CD4-positive, alpha-beta T cell (primary cell): ENCODE measurements at regions of chr2 and their contacts with region 1.

Region 1: GRCh38 chr2:143259368-143259958 is 130.2 kb downstream of the ARHGAP15 start:
- DNase-seq: peak; percentile 56 to 89 (median 66)
- ATAC-seq: peak; percentile 39
- H3K4me3 ChIP-seq: peak overlapping the region; percentile 13
- H3K4me3 Mint-ChIP-seq: peak overlapping the region; percentile 81
- H3K27ac ChIP-seq: peak overlapping the region in 1 of 2 donors; percentile 50
- H3K27ac Mint-ChIP-seq: peak overlapping the region; percentile 86
- H3K4me1 ChIP-seq: peaks cover 43% of the 10 kb centered on the region
- H3K4me1 Mint-ChIP-seq: peaks cover 85% of the 10 kb centered on the region
- H3K27me3 ChIP-seq: no peaks in the 10 kb centered on the region
- H3K27me3 Mint-ChIP-seq: no peaks in the 10 kb centered on the region
- CTCF ChIP-seq: peak; percentile 89

Region 2: DNA sequence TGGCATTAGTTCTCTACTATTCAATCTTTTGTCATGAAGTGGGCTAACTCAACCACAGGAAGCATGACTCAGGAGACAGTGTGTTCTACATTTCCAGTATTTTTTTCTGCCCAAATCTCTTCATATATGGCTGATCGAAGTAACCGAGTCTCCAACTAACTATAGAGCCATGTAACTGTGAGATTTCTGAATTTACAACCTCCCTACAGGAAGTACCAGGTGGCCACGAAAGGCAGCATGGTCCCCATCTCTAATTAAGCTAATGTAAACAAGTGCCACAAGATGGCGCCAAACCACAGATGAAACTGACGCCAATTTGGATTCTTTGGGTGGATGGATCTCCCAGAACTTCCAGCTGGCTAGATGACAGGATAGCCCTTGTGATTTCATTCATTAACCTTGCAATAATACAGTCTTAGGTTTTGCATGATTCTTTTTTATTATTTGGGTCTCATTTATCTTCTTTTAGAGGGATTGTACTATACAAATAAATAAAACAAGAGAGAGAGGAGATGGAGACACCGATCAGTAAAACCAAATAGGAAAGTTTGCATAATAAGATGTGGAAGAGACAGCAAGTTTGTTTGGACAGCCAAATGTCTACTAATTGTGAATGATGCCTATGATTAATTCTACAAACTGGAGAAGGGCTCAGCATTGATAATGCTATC is 148.6 kb before region 1 on chr2:
- CTCF ChIA-PET with region 1: interaction called, 42 read pairs
- POLR2A ChIA-PET with region 1: interaction called, 42 read pairs
- intact Hi-C with region 1: loop called (anchors 1 kb)
- DNase-seq: peak; percentile 39 to 88 (median 54)
- ATAC-seq: peak; percentile 93
- H3K4me3 ChIP-seq: no peak overlapping the region
- H3K4me3 Mint-ChIP-seq: no peak overlapping the region
- H3K27ac ChIP-seq: peak overlapping the region in 1 of 2 donors; percentile 20
- H3K27ac Mint-ChIP-seq: peak overlapping the region; percentile 34
- H3K4me1 ChIP-seq: peaks cover 5% of the 10 kb centered on the region
- H3K4me1 Mint-ChIP-seq: peaks cover 42% of the 10 kb centered on the region
- H3K27me3 ChIP-seq: no peaks in the 10 kb centered on the region
- H3K27me3 Mint-ChIP-seq: no peaks in the 10 kb centered on the region
- CTCF ChIP-seq: peak; percentile 83

Region 3: GRCh38 chr2:143162123-143162837 is 97.2 kb before region 1 on chr2:
- CTCF ChIA-PET with region 1: interaction called, 76 read pairs
- POLR2A ChIA-PET with region 1: interaction called, 36 read pairs
- intact Hi-C with region 1: loop called (anchors 1 to 2 kb)
- DNase-seq: peak; percentile 24 to 86 (median 55)
- ATAC-seq: peak; percentile 99
- H3K4me3 ChIP-seq: no peak overlapping the region
- H3K4me3 Mint-ChIP-seq: peak overlapping the region; percentile 2
- H3K27ac ChIP-seq: no peak overlapping the region
- H3K27ac Mint-ChIP-seq: peak overlapping the region; percentile 84
- H3K4me1 ChIP-seq: peaks cover 13% of the 10 kb centered on the region
- H3K4me1 Mint-ChIP-seq: peaks cover 95% of the 10 kb centered on the region
- H3K27me3 ChIP-seq: no peaks in the 10 kb centered on the region
- H3K27me3 Mint-ChIP-seq: no peaks in the 10 kb centered on the region
- CTCF ChIP-seq: peak; percentile 82

Region 4: GRCh38 chr2:143217512-143218115 is 41.8 kb before region 1 on chr2:
- CTCF ChIA-PET with region 1: interaction called, 16 read pairs
- POLR2A ChIA-PET with region 1: interaction called, 10 read pairs
- intact Hi-C with region 1: loop called (anchors 5 kb)
- DNase-seq: no peak
- ATAC-seq: no peak
- H3K4me3 ChIP-seq: no peak overlapping the region
- H3K4me3 Mint-ChIP-seq: no peak overlapping the region
- H3K27ac ChIP-seq: peak overlapping the region in 1 of 2 donors; percentile 6
- H3K27ac Mint-ChIP-seq: peak overlapping the region; percentile 65
- H3K4me1 ChIP-seq: peaks cover 5% of the 10 kb centered on the region
- H3K4me1 Mint-ChIP-seq: peaks cover 68% of the 10 kb centered on the region
- H3K27me3 ChIP-seq: no peaks in the 10 kb centered on the region
- H3K27me3 Mint-ChIP-seq: no peaks in the 10 kb centered on the region
- CTCF ChIP-seq: no peak

Region 5: DNA sequence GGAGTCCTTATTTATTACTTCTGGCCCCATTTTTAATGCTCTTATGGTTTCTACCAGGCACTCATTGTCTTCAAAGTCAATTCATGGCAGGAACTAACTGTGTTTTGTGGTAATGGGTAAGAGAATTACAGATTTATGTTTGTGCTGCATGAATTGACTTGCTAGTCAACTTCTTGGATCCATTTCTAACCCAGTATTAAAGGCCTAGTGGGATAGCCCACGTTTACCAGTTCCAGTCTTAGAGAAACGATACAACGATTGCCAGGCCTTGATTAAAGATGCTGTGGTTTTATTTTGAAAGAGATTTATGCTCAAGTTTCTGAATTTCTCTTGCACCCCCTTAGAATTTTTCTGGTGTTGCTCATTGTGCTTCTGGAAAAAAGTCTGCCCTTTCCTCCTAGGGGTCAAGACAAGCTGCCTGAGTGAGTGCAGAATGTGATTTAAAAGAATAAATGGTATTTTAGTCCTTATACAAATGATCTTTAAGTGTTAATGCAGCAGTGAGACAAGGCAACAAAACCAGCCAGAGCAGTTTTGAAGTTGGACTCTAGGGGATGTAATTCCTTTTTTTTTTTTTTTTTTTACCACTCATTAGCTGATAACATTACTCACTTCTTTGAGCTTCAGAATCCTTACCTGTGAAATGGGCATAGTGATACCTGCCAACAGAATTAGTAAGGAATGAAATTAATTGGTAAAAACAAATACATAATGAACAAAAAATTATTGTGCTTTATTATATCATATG is 28.8 kb before region 1 on chr2:
- CTCF ChIA-PET with region 1: interaction called, 8 read pairs
- POLR2A ChIA-PET with region 1: interaction called, 10 read pairs
- intact Hi-C with region 1: no loop called
- DNase-seq: no peak
- ATAC-seq: no peak
- H3K4me3 ChIP-seq: no peak overlapping the region
- H3K4me3 Mint-ChIP-seq: no peak overlapping the region
- H3K27ac ChIP-seq: no peak overlapping the region
- H3K27ac Mint-ChIP-seq: no peak overlapping the region
- H3K4me1 ChIP-seq: no peaks in the 10 kb centered on the region
- H3K4me1 Mint-ChIP-seq: peaks cover 22% of the 10 kb centered on the region
- H3K27me3 ChIP-seq: no peaks in the 10 kb centered on the region
- H3K27me3 Mint-ChIP-seq: no peaks in the 10 kb centered on the region
- CTCF ChIP-seq: no peak

Region 6: GRCh38 chr2:143588746-143589145 is 329.3 kb after region 1 on chr2:
- CTCF ChIA-PET with region 1: no interaction called
- POLR2A ChIA-PET with region 1: no interaction called
- intact Hi-C with region 1: no loop called
- DNase-seq: no peak
- ATAC-seq: no peak
- H3K4me3 ChIP-seq: no peak overlapping the region
- H3K4me3 Mint-ChIP-seq: no peak overlapping the region
- H3K27ac ChIP-seq: no peak overlapping the region
- H3K27ac Mint-ChIP-seq: no peak overlapping the region
- H3K4me1 ChIP-seq: no peaks in the 10 kb centered on the region
- H3K4me1 Mint-ChIP-seq: peaks cover 30% of the 10 kb centered on the region
- H3K27me3 ChIP-seq: no peaks in the 10 kb centered on the region
- H3K27me3 Mint-ChIP-seq: no peaks in the 10 kb centered on the region
- CTCF ChIP-seq: no peak

Region 7: DNA sequence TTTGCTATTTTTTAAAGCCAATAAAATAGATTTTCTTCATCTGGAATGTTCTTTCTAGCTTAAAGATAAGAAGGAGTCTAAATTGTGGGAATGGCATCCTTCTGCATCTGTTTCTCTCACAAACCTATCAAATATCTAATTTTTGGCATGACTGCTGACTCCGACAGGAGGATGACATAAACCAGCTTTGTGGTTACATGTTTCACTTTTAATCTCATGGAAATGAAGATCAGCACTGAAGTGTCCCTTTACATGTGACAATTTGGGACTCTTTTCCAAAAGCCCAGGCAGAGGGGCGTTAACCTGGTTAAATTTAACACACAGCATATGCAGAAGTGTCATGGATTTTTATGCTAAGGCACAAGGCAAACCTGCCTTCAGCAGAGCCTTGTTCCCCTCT is 564.4 kb after region 1 on chr2:
- CTCF ChIA-PET with region 1: no interaction called
- POLR2A ChIA-PET with region 1: no interaction called
- intact Hi-C with region 1: no loop called
- DNase-seq: no peak
- ATAC-seq: no peak
- H3K4me3 ChIP-seq: no peak overlapping the region
- H3K4me3 Mint-ChIP-seq: no peak overlapping the region
- H3K27ac ChIP-seq: no peak overlapping the region
- H3K27ac Mint-ChIP-seq: no peak overlapping the region
- H3K4me1 ChIP-seq: no peaks in the 10 kb centered on the region
- H3K4me1 Mint-ChIP-seq: no peaks in the 10 kb centered on the region
- H3K27me3 ChIP-seq: peaks cover 0 to 10% of the 10 kb centered on the region in 2 experiments
- H3K27me3 Mint-ChIP-seq: peaks cover 12% of the 10 kb centered on the region
- CTCF ChIP-seq: no peak